Activated T-helper 2 cell treated with anti-CD3 and anti-CD28 coated beads, Interferon-gamma antibody, Interleukin-2, Interleukin-4, amounts not matched to agents 10 μg/mL and 5 μg/mL and 100 μg/mL, durations not matched to agents 14 hours and 24 hours and 36 hours (primary cell): ENCODE measurements at regions of chr10 and their contacts with region 1.

Region 1: GRCh38 chr10:27241652-27242472 is 1.3 kb upstream of the ACBD5 start:
- DNase-seq: peak; percentile 86
- H3K4me3 Mint-ChIP-seq: peak overlapping the region; percentile 98
- H3K27ac Mint-ChIP-seq: peak overlapping the region; percentile 96
- H3K4me1 Mint-ChIP-seq: peaks cover 32% of the 10 kb centered on the region
- H3K27me3 Mint-ChIP-seq: peaks cover 2% of the 10 kb centered on the region

Region 2: DNA sequence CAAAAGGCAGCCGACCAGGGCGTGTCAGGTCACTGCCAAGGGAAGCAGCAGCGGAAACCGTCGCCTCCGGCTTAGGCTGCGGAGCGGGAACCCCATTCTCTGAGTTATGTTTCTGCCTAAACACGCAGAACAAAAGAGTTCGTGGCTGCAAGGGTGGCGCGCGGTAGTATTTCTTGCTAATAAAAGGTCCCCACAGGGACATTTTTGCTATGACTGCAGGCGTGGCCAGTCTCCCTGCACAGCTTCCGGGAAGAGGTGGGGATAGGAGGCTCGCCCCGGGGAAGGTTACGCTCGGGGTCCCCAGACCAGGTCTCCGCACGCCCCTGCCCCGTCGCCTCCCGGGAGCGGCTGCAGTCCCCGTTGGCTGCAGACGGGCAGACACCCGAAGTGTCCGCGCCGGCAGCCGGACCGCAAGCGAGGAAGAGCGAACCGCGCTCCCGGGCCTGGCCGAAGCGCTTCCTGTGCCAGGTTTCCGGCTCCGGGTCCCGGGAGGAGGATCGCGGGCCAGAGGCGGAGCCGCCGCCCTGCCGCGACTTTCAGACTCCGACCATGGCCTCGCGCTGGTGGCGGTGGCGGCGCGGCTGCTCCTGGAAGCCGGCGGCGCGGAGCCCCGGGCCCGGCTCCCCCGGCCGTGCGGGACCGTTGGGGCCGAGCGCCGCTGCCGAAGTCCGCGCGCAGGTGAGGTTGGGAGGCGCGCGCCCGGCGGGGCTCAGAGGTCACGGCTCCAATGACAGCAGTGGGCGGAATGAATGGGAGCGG is 544.5 kb before region 1 on chr10 and contains the start of gene PDSS1:
- intact Hi-C with region 1: loop called (anchors 10 kb)
- DNase-seq: peak; percentile 64
- H3K4me3 Mint-ChIP-seq: peak within 1 kb of the TSS; percentile 99
- H3K27ac Mint-ChIP-seq: peak within 1 kb of the TSS; percentile 92
- H3K4me1 Mint-ChIP-seq: peaks cover 30% of the 10 kb centered on the region
- H3K27me3 Mint-ChIP-seq: no peaks in the 10 kb centered on the region
- total RNA-seq, gene PDSS1: 27.9 and 32.3 TPM in 2 replicates

Region 3: GRCh38 chr10:27099916-27100812 is 141.7 kb before region 1 on chr10 and contains the start of gene ANKRD26:
- intact Hi-C with region 1: loop called (anchors 2 kb)
- DNase-seq: peak; percentile 95
- H3K4me3 Mint-ChIP-seq: peak within 1 kb of the TSS; percentile 85
- H3K27ac Mint-ChIP-seq: peak within 1 kb of the TSS; percentile 91
- H3K4me1 Mint-ChIP-seq: peaks cover 34% of the 10 kb centered on the region
- H3K27me3 Mint-ChIP-seq: peaks cover 2% of the 10 kb centered on the region
- total RNA-seq, gene ANKRD26: 5.5 and 6.5 TPM in 2 replicates

Region 4: DNA sequence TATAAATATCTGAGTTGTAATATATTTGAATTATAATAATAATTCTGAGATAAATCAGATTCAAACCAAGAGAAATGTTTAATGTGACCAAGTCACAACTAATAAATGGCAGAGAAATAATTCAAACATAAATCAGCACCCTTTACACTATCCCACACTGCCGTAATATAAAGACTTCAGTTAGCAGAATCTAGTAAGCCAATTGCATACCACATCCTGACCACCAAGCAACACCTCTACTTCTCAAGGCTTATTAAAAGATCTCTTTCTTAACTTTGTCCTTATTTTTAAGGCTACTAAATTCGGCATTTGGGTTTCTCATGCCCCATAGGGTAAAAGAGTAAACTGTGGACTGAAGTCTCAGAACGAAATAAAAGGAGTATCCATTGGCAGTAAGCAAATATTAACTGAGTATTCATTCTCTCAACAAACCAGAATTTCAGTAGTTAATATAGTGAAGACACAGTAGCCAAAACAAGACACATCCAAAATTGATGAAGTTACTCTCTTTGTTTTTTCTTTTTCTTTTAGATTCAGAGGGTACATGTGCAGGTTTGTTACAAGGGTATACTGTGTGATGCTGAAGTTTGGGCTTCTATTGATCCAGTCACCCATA is 16.1 kb before region 1 on chr10:
- intact Hi-C with region 1: no loop called
- DNase-seq: no peak
- H3K4me3 Mint-ChIP-seq: no peak overlapping the region
- H3K27ac Mint-ChIP-seq: peak overlapping the region; percentile 1
- H3K4me1 Mint-ChIP-seq: peaks cover 8% of the 10 kb centered on the region
- H3K27me3 Mint-ChIP-seq: no peaks in the 10 kb centered on the region

Region 5: DNA sequence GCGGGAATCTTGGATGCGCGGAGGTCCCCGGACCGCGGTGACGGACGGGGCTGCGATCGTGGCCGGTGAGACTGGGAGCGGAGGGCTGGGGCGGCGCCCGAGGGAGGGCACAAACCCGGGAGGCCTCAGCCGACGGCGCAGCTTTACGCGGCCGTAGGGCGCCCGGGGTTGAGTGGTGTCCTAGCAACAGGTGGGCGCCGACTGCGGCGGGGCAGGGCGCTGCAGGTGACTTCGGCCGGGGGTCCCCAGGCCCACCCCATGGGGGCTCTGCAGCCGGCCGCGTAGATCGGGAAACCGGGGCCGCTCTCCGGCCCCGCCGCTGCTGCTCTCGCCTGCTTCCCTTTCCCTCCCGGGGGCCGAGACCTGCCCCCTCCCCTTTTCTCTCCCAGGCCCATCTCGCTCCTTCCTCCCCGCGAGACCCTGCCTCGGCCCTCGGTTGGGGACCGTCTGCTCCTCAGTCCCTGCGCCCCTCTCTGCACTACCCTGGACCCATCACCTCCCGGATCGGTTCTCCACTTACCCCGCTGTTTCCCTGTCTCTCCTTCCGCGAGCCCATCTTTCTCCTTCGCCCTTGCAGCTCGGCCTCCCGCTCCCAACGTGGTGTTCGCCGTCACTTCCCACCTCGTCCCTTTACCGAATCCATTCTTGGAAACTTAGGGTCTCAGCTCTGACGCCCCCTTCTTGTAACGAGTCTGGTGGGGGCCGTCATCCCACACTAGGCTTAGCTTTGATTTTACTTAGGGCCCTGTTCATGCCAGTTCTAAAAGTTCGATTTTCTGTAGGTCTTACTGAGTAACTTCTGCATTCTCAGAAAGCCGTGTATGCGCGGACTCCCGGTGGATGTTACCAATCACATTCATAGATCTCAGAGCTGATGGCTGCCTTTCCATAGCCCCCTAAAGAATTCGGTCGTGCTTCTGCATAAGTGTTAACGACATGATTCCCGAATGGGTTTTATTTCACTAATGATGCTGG is 17.3 kb after region 1 on chr10:
- intact Hi-C with region 1: loop called (anchors 2 kb)
- DNase-seq: no peak
- H3K4me3 Mint-ChIP-seq: peak overlapping the region; percentile 90
- H3K27ac Mint-ChIP-seq: no peak overlapping the region
- H3K4me1 Mint-ChIP-seq: peaks cover 22% of the 10 kb centered on the region
- H3K27me3 Mint-ChIP-seq: peaks cover 54% of the 10 kb centered on the region

Region 6: DNA sequence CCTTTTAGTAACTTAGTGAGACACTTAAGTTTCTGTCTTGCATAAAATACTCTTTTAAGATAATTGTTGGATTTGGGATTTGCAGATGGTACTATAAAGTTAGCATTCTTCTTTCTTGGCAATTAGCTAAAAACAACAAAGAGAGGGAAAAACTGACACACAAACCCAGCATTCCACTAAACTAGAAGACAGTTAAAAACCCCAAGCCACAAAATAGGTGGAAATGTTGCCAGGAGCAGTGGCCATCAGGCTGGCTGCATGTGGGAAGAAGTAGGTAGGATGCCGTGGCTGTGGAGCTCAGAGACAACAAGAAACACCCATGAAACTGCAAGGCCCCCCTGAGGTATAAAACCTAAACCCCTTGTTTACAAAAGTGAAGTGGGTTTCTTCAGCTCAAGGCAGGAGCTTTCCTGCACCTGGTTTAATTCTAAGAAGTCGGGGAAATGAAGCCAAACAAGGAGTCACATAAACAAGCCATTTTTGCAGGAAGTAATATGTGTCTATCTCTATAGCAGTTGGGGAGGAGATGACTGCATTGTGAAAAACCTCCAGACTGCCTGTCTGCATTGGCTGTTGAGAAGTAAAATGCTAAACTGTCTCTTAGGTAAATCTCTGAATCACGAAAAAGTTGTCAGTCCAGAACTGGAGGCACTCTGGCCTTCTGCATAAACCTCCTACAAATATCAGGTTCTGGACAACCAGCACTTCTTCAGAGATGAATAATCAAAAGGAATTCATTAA is 271.8 kb after region 1 on chr10:
- intact Hi-C with region 1: no loop called
- DNase-seq: no peak
- H3K4me3 Mint-ChIP-seq: peak overlapping the region; percentile 68
- H3K27ac Mint-ChIP-seq: peak overlapping the region; percentile 89
- H3K4me1 Mint-ChIP-seq: peaks cover 49% of the 10 kb centered on the region
- H3K27me3 Mint-ChIP-seq: no peaks in the 10 kb centered on the region

Region 7: DNA sequence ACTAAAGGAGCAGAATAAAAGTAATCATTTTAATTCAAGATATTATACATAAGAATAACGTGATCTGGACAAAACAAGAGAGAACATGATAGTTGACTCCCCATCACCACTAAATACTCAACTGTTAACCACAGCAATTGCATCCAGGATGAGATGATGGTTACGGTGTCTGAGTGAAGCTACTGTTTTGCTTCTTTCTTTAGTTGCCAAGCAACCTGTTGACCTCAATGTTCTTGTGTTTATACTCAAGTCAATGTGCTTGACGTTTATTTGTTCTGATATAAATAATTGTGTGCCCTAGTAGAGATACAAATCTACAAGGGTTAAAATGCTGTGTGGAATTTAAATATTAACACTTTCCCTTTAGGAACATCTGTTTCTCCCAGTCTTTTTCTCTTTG is 1092.4 kb after region 1 on chr10:
- intact Hi-C with region 1: loop called (anchors 2 kb)
- DNase-seq: peak; percentile 58
- H3K4me3 Mint-ChIP-seq: peak overlapping the region; percentile 79
- H3K27ac Mint-ChIP-seq: peak overlapping the region; percentile 98
- H3K4me1 Mint-ChIP-seq: peaks cover 49% of the 10 kb centered on the region
- H3K27me3 Mint-ChIP-seq: peaks cover 2% of the 10 kb centered on the region